ENCODE measurements at regions of chr10 and their contacts with region 1.

Region 1: DNA sequence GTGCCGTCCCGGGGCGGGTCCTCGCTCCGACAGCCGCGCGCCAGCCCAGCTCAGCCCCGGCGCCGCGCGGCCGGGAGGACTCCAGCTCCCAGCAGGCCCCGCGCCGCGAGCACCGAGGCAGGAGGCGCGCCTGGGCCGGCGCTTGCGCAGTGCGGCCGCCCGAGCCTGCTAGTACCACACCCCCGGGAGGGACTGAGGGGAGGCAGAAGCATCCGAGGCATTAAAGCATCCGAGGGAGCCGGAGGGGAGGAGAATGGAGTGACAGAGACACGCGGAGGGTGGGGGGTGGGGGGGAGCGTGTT is at the start of gene GRK5:
- DNase-seq: peak; percentile 86 to 93
- H3K4me3 ChIP-seq: peak within 1 kb of the TSS; percentile 78 to 98 (median 91)
- H3K27ac ChIP-seq: peak within 1 kb of the TSS; percentile 96 to 99
- H3K4me1 ChIP-seq: peaks cover 3 to 11% of the 10 kb centered on the region in 2 donors
- H3K27me3 ChIP-seq: no peaks in the 10 kb centered on the region
- CTCF ChIP-seq: no peak
- POLR2A ChIP-seq: no peak
- total RNA-seq, gene GRK5: 14.9 to 20.6 (median 15.2) TPM

Region 2: GRCh38 chr10:119270762-119271366 is 63.5 kb after region 1 on chr10:
- intact Hi-C with region 1: no loop called
- DNase-seq: peak in 1 of 2 donors; percentile 65
- H3K4me3 ChIP-seq: peak overlapping the region in 1 of 3 donors; percentile 7
- H3K27ac ChIP-seq: peak overlapping the region; percentile 40 to 50
- H3K4me1 ChIP-seq: peaks cover 0 to 4% of the 10 kb centered on the region in 2 donors
- H3K27me3 ChIP-seq: no peaks in the 10 kb centered on the region
- CTCF ChIP-seq: no peak
- POLR2A ChIP-seq: no peak

Region 3: DNA sequence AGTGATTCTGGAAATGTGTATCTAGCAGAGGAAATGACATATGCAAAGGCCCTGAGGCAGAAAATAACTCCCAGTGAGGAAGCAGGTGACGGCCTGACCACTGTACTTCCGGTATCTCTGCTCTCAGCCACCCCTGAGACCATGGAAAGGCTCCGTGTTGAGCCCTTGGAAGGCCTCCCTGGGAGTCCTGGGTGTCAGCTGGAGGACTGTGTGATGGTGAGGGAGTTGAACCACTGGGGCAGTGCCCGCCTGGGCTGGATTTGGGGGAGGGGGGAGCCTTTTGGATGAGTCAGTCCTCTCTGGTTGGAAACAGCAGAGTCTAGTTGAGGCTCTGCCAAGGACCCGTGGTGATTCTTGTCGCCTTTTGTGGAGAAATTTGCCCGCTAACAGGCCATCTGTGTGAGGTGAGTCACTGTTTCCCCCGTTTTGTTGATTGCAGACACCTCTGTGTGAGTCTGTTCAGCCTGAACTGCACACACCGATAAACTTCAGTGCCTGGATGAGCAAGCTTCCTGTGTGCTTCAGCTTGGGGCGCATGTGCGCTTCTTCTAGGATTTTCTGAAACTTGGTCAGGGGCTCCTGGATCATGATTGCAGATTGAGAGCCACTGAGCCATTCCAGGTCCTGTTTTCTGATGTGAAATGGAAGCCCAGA is 98.7 kb after region 1 on chr10:
- intact Hi-C with region 1: loop called (anchors 10 kb)
- DNase-seq: peak in 1 of 2 donors; percentile 51
- H3K4me3 ChIP-seq: peak overlapping the region in 1 of 3 donors; percentile 25
- H3K27ac ChIP-seq: peak overlapping the region; percentile 64 to 80
- H3K4me1 ChIP-seq: no peaks in the 10 kb centered on the region
- H3K27me3 ChIP-seq: no peaks in the 10 kb centered on the region
- CTCF ChIP-seq: no peak
- POLR2A ChIP-seq: no peak

Region 4: DNA sequence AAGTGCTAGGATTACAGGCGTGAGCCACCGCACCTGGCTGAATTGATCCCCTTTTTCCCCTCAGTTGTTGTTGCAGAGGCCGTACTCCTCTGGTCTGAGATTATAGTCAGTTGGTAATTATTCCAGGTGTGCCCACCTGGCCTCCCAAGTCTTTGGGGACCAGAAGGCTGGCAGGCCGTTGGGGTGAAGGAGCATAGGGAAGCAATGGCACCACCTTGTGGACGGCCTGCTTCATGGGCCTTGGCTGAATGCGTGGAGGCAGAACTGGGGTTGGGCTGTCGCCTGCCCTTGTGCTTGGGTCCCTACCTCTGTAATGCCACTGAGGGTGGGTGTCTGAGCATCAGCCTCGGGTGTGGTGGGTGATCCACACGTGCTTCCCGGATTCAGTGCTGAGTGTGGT is 209.5 kb after region 1 on chr10:
- intact Hi-C with region 1: loop called (anchors 2 kb)
- DNase-seq: peak in 1 of 2 donors; percentile 67
- H3K4me3 ChIP-seq: no peak overlapping the region
- H3K27ac ChIP-seq: no peak overlapping the region
- H3K4me1 ChIP-seq: peaks cover 0 to 6% of the 10 kb centered on the region in 2 donors
- H3K27me3 ChIP-seq: no peaks in the 10 kb centered on the region
- CTCF ChIP-seq: peak; percentile 45 to 67 (median 50)
- POLR2A ChIP-seq: no peak

Region 5: DNA sequence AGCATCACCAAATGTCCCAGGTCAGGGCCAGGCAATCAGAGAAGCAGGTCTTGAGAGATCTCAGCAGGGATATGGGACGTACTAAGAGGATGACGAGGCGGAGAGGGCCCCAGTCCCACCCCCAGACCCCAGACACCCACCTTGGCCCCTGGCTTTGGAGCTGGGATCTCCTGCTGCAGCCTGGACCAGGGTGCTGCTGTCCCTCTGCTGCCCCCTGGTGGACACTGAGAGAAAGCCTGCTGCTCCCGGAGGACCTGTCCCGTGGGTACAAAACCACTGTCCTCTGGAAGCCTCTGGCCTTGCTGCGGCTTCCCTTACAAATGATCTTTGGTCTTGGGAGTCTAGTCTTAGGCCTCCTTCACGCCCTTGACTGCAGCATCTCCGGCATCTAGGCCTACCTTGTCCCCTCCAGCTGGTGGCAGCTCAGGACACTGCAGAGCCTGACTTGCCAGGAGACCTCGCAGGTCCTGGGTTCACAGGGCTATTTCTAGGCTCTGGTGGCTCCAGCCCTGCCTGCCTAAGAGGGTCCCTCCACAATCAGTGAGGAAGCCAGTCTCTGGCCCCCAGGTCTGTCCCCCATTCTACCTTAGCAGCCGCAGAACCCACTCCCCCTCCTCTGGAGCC is 238.1 kb after region 1 on chr10:
- intact Hi-C with region 1: loop called (anchors 10 kb)
- DNase-seq: peak; percentile 74 to 89
- H3K4me3 ChIP-seq: no peak overlapping the region
- H3K27ac ChIP-seq: peak overlapping the region in 1 of 2 donors; percentile 38
- H3K4me1 ChIP-seq: peaks cover 14% of the 10 kb centered on the region in 2 donors
- H3K27me3 ChIP-seq: no peaks in the 10 kb centered on the region
- CTCF ChIP-seq: peak; percentile 84 to 95 (median 92)
- POLR2A ChIP-seq: no peak